ENCODE measurements at regions of chr1 and their contacts with region 1.

Region 1: GRCh38 chr1:160085686-160086455 is 4.5 kb downstream of the KCNJ9 start:
- DNase-seq: peak; percentile 83 to 93 (median 92)
- ATAC-seq: peak; percentile 65 to 69
- H3K4me3 ChIP-seq: no peak overlapping the region
- H3K27ac ChIP-seq: peak overlapping the region; percentile 50
- H3K4me1 ChIP-seq: no peaks in the 10 kb centered on the region
- H3K27me3 ChIP-seq: no peaks in the 10 kb centered on the region

Region 2: GRCh38 chr1:160046494-160047110 is 39.3 kb before region 1 on chr1:
- intact Hi-C with region 1: loop called in 1 of 4 experiments (anchors 5 kb)
- DNase-seq: peak; percentile 54 to 75 (median 73)
- ATAC-seq: peak; percentile 74 to 81
- H3K4me3 ChIP-seq: no peak overlapping the region
- H3K27ac ChIP-seq: no peak overlapping the region
- H3K4me1 ChIP-seq: peaks cover 2% of the 10 kb centered on the region
- H3K27me3 ChIP-seq: no peaks in the 10 kb centered on the region

Region 3: GRCh38 chr1:160376525-160377131 is 290.8 kb after region 1 on chr1:
- intact Hi-C with region 1: loop called in 2 of 4 experiments (anchors 10 kb)
- DNase-seq: no peak
- ATAC-seq: peak; percentile 79 to 83
- H3K4me3 ChIP-seq: no peak overlapping the region
- H3K27ac ChIP-seq: no peak overlapping the region
- H3K4me1 ChIP-seq: peaks cover 7% of the 10 kb centered on the region
- H3K27me3 ChIP-seq: no peaks in the 10 kb centered on the region

Measured in right cardiac atrium (tissue), 5 donors.